Posterior cingulate gyrus (tissue), 11 donors: ENCODE measurements at regions of chr17 and their contacts with region 1.

Region 1: GRCh38 chr17:16438557-16439302 is 23.4 kb downstream of the TRPV2 start:
- DNase-seq: peak; percentile 90 to 99 (median 94)

Region 2: GRCh38 chr17:16322636-16323035 is 116.1 kb before region 1 on chr17:
- intact Hi-C with region 1: no loop called
- DNase-seq: no peak

Region 3: GRCh38 chr17:16363749-16364536 is 74.8 kb before region 1 on chr17:
- intact Hi-C with region 1: loop called (anchors 5 kb)
- DNase-seq: peak; percentile 50 to 96 (median 82)

Region 4: GRCh38 chr17:16380640-16381495 is 57.9 kb before region 1 on chr17 and contains the start of gene UBB:
- intact Hi-C with region 1: loop called (anchors 2 kb)
- DNase-seq: peak; percentile 91 to 99 (median 94)